Aorta (tissue), 5 donors: ENCODE measurements at regions of chr1 and their contacts with region 1.

Region 1: GRCh38 chr1:156510709-156511108 is 10.1 kb upstream of the MEF2D start:
- DNase-seq: peak; percentile 88 to 95
- ATAC-seq: peak; percentile 71
- H3K4me3 ChIP-seq: no peak overlapping the region
- H3K27ac ChIP-seq: peak overlapping the region; percentile 46 to 87
- H3K4me1 ChIP-seq: peaks cover 0 to 2% of the 10 kb centered on the region in 2 donors
- H3K27me3 ChIP-seq: no peaks in the 10 kb centered on the region

Region 2: DNA sequence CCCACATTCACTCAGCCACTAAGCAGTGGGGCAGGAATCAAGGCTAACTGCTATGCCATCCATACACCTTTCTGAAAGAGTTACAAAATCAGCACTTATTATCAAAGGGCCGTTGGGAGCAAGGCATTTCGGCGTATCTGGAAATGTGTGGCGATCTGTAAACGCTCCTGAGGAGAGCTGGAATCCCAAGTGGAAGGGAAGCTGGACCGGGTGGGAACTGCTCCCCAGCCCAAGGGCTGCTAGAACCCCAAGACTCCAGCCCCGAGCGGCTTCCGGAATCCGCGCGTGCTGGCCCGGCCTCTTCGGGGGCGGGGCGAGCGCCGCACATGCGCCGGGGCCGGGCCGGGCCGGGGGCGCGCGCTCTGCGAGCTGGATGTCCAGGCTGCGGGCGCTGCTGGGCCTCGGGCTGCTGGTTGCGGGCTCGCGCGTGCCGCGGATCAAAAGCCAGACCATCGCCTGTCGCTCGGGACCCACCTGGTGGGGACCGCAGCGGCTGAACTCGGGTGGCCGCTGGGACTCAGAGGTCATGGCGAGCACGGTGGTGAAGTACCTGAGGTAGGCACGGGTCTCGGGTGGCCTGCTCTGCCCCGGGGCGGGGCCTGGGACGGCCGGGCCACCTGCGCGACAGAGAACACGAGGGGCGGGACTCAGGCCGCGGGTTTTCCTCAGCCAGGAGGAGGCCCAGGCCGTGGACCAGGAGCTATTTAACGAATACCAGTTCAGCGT is 80.9 kb after region 1 on chr1 and contains the start of gene NAXE:
- intact Hi-C with region 1: loop called in 1 of 2 experiments (anchors 5 kb)
- DNase-seq: peak; percentile 81 to 90
- ATAC-seq: peak; percentile 94
- H3K4me3 ChIP-seq: peak within 1 kb of the TSS; percentile 71 to 77
- H3K27ac ChIP-seq: peak within 1 kb of the TSS; percentile 23 to 91
- H3K4me1 ChIP-seq: no peaks in the 10 kb centered on the region
- H3K27me3 ChIP-seq: no peaks in the 10 kb centered on the region
- total RNA-seq, gene NAXE: 41.5 to 46.0 TPM